ENCODE measurements at regions of chr11 and their contacts with region 1.

Region 1: DNA sequence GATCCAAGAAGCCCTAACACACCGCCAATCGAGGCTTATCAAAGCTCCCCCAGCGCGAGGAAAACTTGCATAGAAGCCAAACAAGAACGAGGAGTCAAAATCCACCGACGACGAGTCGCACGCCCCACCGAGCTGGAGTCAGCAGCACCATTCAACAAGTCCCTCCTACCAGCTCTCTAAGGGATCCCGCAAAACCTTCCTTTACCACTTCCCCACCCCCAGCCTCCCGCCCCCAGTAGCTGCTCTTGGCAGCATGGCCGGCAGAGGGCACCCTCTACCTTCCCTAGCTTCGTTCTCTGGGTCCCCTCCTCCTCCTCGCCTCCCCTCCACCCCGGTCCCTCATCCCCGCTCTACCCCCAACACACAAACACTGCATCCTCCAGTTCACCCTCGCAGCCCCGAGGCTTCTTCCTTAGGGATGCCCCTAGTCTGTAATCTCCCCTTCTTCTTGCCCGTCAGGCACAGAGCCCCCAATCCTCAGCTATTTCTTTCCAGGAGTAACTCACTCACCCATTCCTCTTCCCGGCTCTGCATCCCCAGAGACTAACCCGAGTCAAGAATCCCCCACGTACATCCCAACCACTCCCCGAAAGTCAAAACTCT is 1.3 kb downstream of the BDNF start:
- DNase-seq: peak; percentile 48 to 79
- ATAC-seq: peak; percentile 83

Region 2: GRCh38 chr11:27429761-27430412 is 269.1 kb before region 1 on chr11:
- intact Hi-C with region 1: no loop called
- DNase-seq: no peak
- ATAC-seq: peak; percentile 14

Region 3: DNA sequence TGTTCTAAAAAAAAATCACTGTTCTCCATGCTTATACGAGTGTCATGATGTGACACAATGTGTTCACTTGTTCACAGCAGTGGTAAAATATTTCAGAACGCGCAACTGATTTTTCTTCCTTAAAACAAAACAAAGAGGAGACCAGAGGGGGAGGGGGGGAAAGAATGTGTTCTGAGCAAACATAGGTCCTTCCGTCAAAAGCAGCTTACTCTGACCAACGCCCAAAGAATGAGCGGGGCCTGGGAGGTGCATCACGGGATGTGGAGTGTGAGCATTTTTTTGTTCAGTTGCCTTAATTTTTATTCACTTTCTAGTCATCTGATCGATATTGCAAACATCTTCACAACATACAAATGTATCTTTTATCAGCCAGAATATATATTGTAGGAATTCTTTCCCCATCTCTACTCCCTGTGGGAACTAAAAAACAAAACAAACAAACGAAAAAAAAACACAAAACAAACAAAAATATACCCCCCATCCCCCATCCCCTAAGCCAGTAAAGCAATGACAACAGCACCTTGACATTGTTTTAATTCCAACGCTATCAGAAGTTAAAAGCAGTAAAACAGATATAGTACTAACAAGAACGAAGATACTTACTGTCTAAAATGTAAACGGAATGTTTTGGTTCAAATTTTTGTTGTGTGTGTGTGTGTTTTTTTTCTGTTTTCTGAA is 42.0 kb before region 1 on chr11:
- intact Hi-C with region 1: no loop called
- DNase-seq: no peak
- ATAC-seq: no peak

Region 4: DNA sequence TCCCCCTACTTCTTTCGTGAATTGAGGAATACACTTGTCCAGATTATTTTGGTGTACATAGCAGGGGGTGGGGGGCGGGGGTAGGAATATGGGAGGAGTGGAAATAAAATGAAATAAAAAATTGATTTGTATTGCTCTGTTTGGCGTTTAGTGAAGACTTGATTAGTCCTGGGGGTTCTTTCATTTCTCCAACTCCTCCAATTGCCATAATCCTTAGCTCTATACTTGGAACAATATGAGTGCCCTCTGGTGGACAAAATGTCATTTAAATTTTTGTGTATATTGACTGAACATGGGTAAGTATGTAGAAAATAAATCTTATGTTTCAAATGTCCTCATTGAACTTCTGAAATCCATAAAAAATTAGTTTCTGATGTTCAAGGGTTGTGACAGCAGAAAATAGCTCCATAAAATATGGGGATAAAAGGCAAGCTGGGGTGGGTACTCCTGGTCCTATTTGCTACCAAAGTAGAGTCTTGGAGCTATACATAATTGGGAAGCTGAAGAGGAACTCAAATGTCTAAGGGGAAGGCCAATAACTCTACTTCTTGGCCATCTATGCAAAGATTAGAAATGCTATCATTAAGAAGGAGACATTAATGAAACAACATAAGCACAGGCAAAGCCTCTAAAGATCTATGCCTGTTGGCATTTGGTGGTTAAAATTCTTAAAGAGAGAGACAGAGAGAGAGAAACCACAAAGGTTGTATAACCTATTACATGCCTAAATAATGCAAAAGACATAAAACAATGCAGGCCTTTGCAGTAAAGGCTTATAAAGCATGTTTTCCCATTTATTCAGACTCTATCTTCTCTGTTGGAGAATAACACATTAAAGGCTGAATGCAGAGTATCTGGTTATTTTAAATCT is 830.8 kb after region 1 on chr11:
- intact Hi-C with region 1: loop called in 1 of 2 experiments (anchors 5 kb)
- DNase-seq: no peak
- ATAC-seq: peak; percentile 50

Region 5: DNA sequence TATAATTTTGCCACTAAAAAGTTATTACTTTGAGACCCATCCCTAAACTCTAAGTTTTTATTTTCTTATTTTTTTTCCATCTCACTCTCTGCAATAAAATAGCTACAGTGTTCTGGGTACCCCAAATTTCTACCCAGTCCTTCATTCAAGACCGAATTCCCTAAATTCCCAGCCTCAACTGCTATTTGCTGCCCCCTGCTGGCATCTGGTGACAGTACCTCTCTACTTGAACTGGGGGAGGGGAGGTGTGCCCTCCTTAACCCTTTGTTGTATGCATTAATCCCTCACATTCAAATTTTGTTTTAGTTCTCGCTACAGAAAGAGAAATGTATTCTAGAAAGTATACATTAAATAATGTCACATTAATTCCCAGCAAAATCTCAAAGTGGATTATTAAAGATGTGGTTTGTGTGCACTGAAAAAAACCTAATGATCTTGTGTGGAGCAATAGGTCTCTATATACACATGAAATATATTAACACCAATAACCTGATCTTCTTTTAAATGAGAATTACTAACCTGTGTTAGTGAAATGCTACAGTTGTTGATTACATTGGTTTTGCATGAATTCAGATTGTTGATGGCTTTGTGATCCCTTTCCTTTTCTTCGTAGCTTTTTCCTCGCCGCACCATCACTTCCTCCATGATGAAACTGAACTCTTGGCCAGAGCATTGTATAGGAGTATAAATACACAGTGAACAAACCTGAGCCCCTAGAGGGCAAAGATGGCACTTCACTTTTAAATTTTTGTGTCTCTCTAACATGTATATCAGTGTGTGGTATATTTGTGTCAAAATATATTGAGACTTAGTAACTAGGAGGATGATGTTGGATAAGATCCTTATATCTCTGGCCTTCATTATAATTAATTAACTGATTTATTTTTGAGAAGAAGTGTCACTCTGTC is 999.2 kb after region 1 on chr11:
- intact Hi-C with region 1: loop called in 1 of 2 experiments (anchors 5 kb)
- DNase-seq: peak in 1 of 2 donors; percentile 58
- ATAC-seq: peak; percentile 55

Region 6: GRCh38 chr11:29333993-29334775 is 1635.2 kb after region 1 on chr11:
- intact Hi-C with region 1: loop called in 1 of 2 experiments (anchors 10 kb)
- DNase-seq: no peak
- ATAC-seq: peak; percentile 64

Measured in left colon (tissue), 2 donors.